Prostate gland (tissue), 2 donors: ENCODE measurements at regions of chr4 and their contacts with region 1.

Region 1: GRCh38 chr4:3442959-3443749 is 1.4 kb downstream of the HGFAC start:
- DNase-seq: peak; percentile 33
- H3K4me3 ChIP-seq: no peak overlapping the region
- H3K27ac ChIP-seq: no peak overlapping the region
- H3K4me1 ChIP-seq: no peaks in the 10 kb centered on the region
- H3K27me3 ChIP-seq: no peaks in the 10 kb centered on the region
- CTCF ChIP-seq: peak; percentile 98 to 99 (median 99)
- POLR2A ChIP-seq: no peak

Region 2: GRCh38 chr4:3106339-3107186 is 336.6 kb before region 1 on chr4:
- intact Hi-C with region 1: loop called (anchors 5 kb)
- DNase-seq: peak; percentile 81
- H3K4me3 ChIP-seq: no peak overlapping the region
- H3K27ac ChIP-seq: no peak overlapping the region
- H3K4me1 ChIP-seq: no peaks in the 10 kb centered on the region
- H3K27me3 ChIP-seq: no peaks in the 10 kb centered on the region
- CTCF ChIP-seq: peak; percentile 67 to 96 (median 92)
- POLR2A ChIP-seq: no peak